HepG2 (cell line): ENCODE measurements at regions of chr11 and their contacts with region 1.

Region 1: DNA sequence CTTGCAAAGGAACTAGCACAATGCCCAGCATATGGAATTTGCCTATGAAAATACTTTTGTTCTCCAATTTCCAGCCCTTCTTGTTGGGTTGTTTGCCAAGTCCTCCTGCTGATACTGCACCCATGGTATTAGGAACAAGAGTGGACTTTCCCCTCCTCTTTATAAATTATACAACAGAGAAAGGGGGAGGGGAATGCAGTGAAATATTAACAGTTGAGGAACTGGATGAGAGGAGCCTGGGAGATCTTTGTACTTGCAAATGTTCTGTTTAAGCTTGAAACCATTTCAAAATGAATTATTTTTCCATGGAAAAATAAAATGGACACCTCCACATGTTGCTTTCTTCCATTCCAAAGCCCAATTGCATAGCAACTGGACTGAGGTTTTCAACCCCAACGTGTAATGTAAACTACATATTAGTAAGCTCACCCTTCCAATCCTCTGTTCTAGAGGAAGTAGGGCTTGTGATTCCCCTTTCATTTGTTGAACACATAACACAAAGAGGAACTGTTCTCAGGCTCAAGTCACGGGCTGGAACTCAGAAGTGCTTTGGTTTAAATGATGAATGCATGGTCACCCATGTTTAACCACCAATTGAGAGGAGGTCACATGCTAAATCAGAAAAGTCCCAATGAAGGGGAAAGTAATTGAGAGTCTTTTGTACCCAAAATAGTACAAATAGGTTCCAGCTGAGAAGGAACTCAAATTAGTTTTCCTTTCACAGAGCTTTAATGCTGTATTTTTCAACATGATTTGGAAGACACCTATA is 66.2 kb upstream of the ZC3H12C start:
- DNase-seq: no peak
- ATAC-seq: no peak
- H3K4me3 ChIP-seq: no peak overlapping the region
- H3K27ac ChIP-seq: no peak overlapping the region
- H3K4me1 ChIP-seq: peaks cover 8% of the 10 kb centered on the region; the same call in 1 of the 2 replicates
- H3K27me3 ChIP-seq: no peaks in the 10 kb centered on the region; a peak in 1 of 5 replicates
- CTCF ChIP-seq: no peak
- EP300 ChIP-seq: no peak
- POLR2A ChIP-seq: no peak
- RAD21 ChIP-seq: no peak

Region 2: GRCh38 chr11:110100476-110101240 is 73.6 kb after region 1 on chr11:
- CTCF ChIA-PET with region 1: no interaction called
- POLR2A ChIA-PET with region 1: no interaction called
- in situ Hi-C with region 1: no loop called
- intact Hi-C with region 1: no loop called
- DNase-seq: no peak
- ATAC-seq: no peak
- H3K4me3 ChIP-seq: no peak overlapping the region
- H3K27ac ChIP-seq: no peak overlapping the region
- H3K4me1 ChIP-seq: peaks cover under 1% of the 10 kb centered on the region; the same call in 1 of the 2 replicates
- H3K27me3 ChIP-seq: no peaks in the 10 kb centered on the region
- CTCF ChIP-seq: no peak
- EP300 ChIP-seq: no peak
- POLR2A ChIP-seq: no peak
- RAD21 ChIP-seq: no peak

Region 3: GRCh38 chr11:111059726-111060125 is 1032.7 kb after region 1 on chr11:
- CTCF ChIA-PET with region 1: no interaction called
- POLR2A ChIA-PET with region 1: no interaction called
- in situ Hi-C with region 1: no loop called
- intact Hi-C with region 1: loop called (anchors 5 kb)
- DNase-seq: no peak
- ATAC-seq: no peak
- H3K4me3 ChIP-seq: no peak overlapping the region
- H3K27ac ChIP-seq: no peak overlapping the region
- H3K4me1 ChIP-seq: no peaks in the 10 kb centered on the region
- H3K27me3 ChIP-seq: no peaks in the 10 kb centered on the region
- CTCF ChIP-seq: no peak
- EP300 ChIP-seq: no peak
- POLR2A ChIP-seq: no peak
- RAD21 ChIP-seq: no peak